Activated CD4-positive, alpha-beta memory T cell treated with anti-CD3 and anti-CD28 coated beads for 36 hours (primary cell): ENCODE measurements at regions of chr1 and their contacts with region 1.

Region 1: DNA sequence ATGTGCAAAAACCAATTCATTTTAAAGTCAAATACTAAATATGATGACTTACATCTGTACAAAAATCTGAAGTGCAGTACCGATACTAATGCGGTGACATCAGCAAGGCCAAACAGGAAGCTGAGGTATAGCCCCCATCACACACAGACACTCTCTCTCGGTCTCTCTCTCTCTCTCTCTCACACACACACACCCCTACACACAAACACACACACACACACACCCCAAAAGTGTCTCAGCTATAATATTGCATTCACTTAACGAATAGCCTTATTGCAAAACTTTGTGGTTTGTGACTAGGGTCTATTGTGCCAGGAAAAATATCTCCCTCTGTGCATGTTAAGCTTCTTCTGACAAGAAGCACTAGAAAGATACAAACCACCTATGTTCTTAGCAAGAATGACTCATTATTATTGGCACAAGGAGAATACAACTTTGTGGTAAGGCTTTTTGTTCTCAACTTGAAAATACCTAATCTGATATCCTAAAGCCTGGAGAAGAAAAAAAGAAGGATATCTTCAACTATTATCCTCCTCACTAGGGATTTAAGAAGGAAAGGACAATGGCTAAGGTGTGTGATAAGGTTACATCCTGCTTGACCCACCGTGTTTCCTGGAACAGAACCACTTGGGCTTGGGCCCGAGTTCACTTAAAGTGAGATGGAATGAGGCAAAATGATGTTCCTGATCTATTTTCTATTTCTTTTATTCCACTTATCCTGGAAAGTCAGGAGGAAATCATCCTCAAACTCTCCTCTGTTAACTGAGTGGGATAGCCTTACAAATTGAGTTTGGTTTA is 107.1 kb downstream of the NIBAN1 start:
- DNase-seq: peak; percentile 79
- H3K4me3 Mint-ChIP-seq: peak overlapping the region; percentile 54
- H3K27ac Mint-ChIP-seq: peak overlapping the region; percentile 85
- H3K4me1 Mint-ChIP-seq: peaks cover 52% of the 10 kb centered on the region
- H3K27me3 Mint-ChIP-seq: no peaks in the 10 kb centered on the region

Region 2: DNA sequence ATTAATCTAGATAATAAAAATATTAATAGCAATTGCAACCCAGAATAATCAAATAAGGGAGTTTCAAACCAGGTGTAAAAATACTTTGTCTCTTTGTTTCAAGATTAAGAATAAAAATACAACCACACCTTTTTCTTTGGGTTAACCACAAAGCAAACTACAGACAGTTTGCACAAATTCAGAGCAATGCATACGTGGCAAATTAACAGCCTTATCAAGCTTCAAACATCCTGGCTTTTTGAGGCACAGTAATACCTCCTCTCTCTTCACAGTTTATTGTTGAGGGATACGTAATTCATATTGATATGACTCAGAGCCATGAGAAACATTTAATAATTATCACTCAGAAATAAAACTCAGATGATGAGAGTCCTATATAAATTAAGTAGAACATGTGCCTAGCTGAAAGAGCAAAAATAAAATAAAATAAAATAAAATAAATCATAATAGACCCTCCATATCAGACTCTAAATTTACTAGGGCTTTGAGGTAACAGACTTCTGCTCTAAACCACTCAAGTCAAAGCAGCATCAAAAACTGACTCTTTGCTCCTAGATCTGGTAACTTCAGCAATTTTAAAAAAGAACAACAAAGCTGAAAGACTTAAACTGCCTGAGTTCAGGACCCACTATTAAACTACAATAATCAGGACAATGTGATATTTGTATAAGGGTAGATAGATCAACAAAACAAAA is 124.0 kb before region 1 on chr1:
- CTCF ChIA-PET with region 1: no interaction called
- POLR2A ChIA-PET with region 1: no interaction called
- intact Hi-C with region 1: loop called (anchors 1 kb)
- DNase-seq: no peak
- H3K4me3 Mint-ChIP-seq: no peak overlapping the region
- H3K27ac Mint-ChIP-seq: peak overlapping the region; percentile 74
- H3K4me1 Mint-ChIP-seq: peaks cover 60% of the 10 kb centered on the region
- H3K27me3 Mint-ChIP-seq: no peaks in the 10 kb centered on the region

Region 3: GRCh38 chr1:184767591-184767990 is 99.6 kb before region 1 on chr1:
- CTCF ChIA-PET with region 1: no interaction called
- POLR2A ChIA-PET with region 1: no interaction called
- intact Hi-C with region 1: no loop called
- DNase-seq: no peak
- H3K4me3 Mint-ChIP-seq: no peak overlapping the region
- H3K27ac Mint-ChIP-seq: no peak overlapping the region
- H3K4me1 Mint-ChIP-seq: no peaks in the 10 kb centered on the region
- H3K27me3 Mint-ChIP-seq: no peaks in the 10 kb centered on the region

Region 4: DNA sequence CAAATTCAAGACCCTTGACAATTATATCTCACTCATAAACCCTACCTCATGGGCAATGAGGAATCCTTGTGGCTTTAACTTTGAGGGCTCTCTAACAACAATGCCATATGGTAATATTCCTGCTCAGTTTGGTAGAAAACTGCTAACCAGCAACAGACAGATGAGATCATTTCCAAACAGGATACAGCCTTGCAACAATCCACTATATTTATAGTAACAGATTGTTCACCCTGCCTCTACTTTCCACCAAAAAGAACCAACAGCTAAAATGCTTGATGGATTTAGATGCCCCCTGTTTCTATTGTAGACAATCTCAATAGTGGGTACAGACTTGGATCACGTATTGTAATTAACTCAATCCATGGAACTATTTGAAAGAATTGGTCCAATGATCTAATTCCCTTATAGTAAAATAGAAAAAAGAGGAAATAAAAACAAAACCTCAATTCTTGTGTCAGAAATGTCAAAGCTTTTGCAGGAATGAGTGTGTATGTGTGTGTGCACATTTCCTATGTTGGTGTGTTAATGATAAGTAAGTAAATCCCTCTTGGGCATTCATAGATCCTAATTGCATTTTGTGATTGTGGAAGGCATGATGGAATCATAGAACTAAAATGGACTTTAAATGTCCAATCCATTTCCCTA is 12.6 kb before region 1 on chr1:
- CTCF ChIA-PET with region 1: no interaction called
- POLR2A ChIA-PET with region 1: no interaction called
- intact Hi-C with region 1: no loop called
- DNase-seq: no peak
- H3K4me3 Mint-ChIP-seq: no peak overlapping the region
- H3K27ac Mint-ChIP-seq: no peak overlapping the region
- H3K4me1 Mint-ChIP-seq: peaks cover 3% of the 10 kb centered on the region
- H3K27me3 Mint-ChIP-seq: no peaks in the 10 kb centered on the region

Region 5: GRCh38 chr1:184881941-184882913 is 15.0 kb after region 1 on chr1:
- CTCF ChIA-PET with region 1: interaction called, 14 read pairs
- POLR2A ChIA-PET with region 1: interaction called, 17 read pairs
- intact Hi-C with region 1: loop called (anchors 1 kb)
- DNase-seq: peak; percentile 48
- H3K4me3 Mint-ChIP-seq: peak overlapping the region; percentile 13
- H3K27ac Mint-ChIP-seq: peak overlapping the region; percentile 92
- H3K4me1 Mint-ChIP-seq: peaks cover 33% of the 10 kb centered on the region
- H3K27me3 Mint-ChIP-seq: peaks cover 2% of the 10 kb centered on the region

Region 6: GRCh38 chr1:184905474-184905894 is 38.3 kb after region 1 on chr1:
- CTCF ChIA-PET with region 1: no interaction called
- POLR2A ChIA-PET with region 1: no interaction called
- intact Hi-C with region 1: loop called (anchors 1 kb)
- DNase-seq: no peak
- H3K4me3 Mint-ChIP-seq: no peak overlapping the region
- H3K27ac Mint-ChIP-seq: no peak overlapping the region
- H3K4me1 Mint-ChIP-seq: peaks cover 26% of the 10 kb centered on the region
- H3K27me3 Mint-ChIP-seq: no peaks in the 10 kb centered on the region

Region 7: DNA sequence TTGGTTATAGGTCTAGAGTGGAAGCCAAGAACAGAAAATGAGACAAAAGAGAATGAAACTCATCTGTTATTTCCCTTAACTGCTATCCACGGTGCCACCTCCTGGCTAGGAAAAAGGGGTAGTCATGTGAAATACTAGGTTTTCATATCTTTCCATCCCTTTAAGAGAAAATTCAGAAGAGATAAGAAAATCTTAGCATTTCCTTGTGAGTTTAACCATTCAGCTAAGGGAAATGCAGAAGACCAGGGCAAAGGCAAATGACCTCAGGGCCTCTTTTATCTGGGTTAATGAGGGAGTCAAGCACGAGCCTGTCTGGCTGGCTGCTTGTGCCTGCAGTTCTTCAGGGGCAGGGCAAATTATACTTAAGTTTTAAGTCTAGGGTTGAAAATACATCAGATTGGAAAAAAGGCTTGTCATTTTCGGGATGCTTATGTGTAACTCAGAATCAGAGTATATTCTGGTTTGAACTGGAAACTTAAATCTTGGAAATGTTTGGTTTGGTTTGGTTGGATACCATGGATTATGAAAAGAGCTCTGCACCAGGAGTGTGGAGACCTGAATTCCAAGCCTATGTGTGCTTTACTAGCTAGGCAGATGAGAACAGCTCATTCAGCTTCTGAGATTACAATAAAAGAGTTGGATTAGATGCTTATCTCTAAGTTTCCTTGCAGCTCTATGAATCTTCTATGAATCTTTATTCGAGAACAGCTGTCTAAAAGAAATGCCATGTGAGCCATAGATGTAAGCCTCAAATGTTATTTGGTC is 87.2 kb after region 1 on chr1:
- CTCF ChIA-PET with region 1: interaction called, 3 read pairs
- POLR2A ChIA-PET with region 1: interaction called, 6 read pairs
- intact Hi-C with region 1: loop called (anchors 1 kb)
- DNase-seq: no peak
- H3K4me3 Mint-ChIP-seq: peak overlapping the region; percentile 40
- H3K27ac Mint-ChIP-seq: peak overlapping the region; percentile 74
- H3K4me1 Mint-ChIP-seq: peaks cover 29% of the 10 kb centered on the region
- H3K27me3 Mint-ChIP-seq: no peaks in the 10 kb centered on the region

Region 8: GRCh38 chr1:184973272-184974055 is 106.3 kb after region 1 on chr1:
- CTCF ChIA-PET with region 1: interaction called, 3 read pairs
- POLR2A ChIA-PET with region 1: interaction called, 33 read pairs
- intact Hi-C with region 1: loop called (anchors 1 kb)
- DNase-seq: peak; percentile 86
- H3K4me3 Mint-ChIP-seq: peak overlapping the region; percentile 94
- H3K27ac Mint-ChIP-seq: peak overlapping the region; percentile 96
- H3K4me1 Mint-ChIP-seq: peaks cover 53% of the 10 kb centered on the region
- H3K27me3 Mint-ChIP-seq: peaks cover 6% of the 10 kb centered on the region